ENCODE measurements at regions of chr21 and their contacts with region 1.

Region 1: DNA sequence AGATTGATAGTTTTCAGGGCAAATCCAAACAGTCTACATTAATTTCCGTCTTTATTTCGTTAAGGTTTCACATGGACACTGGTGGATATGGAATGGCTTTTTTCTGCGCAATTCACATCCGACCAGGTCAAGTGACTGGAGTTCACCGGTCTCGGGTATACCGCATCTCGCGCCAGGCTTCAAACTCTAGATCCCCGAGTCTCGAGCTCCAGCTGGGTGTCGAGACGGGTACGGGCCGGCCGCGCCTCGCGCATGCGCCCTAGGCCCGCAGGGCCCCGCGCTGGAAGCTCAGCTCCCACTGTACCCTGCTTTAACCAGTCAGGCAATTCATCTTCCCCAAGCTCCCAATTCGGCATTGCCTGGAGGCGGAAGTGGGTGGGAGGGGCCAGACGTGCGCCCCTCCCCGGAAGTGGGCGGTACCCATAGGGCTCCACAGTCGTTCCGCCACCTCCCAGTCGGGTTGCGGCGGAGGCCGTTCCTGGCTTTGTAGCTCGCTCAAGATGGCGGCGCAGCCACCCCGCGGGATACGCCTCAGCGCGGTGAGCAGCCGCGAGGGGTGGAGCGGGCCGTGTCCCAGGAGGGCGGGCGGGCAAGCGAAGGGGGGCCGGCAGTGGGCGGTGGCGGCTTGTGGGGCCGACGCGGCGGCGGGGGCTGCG is at the start of gene MORC3:
- DNase-seq: peak; percentile 98 to 99 (median 99)
- ATAC-seq: peak; percentile 99
- H3K4me3 ChIP-seq: peak within 1 kb of the TSS; percentile 75
- H3K27ac ChIP-seq: peak within 1 kb of the TSS; percentile 94
- H3K4me1 ChIP-seq: peaks cover 4% of the 10 kb centered on the region
- H3K27me3 ChIP-seq: no peaks in the 10 kb centered on the region
- total RNA-seq, gene MORC3: 20.6 to 23.1 (median 21.8) TPM

Region 2: GRCh38 chr21:36047139-36047538 is 272.8 kb before region 1 on chr21:
- intact Hi-C with region 1: no loop called
- DNase-seq: no peak
- ATAC-seq: no peak
- H3K4me3 ChIP-seq: no peak overlapping the region
- H3K27ac ChIP-seq: no peak overlapping the region
- H3K4me1 ChIP-seq: no peaks in the 10 kb centered on the region
- H3K27me3 ChIP-seq: no peaks in the 10 kb centered on the region

Region 3: DNA sequence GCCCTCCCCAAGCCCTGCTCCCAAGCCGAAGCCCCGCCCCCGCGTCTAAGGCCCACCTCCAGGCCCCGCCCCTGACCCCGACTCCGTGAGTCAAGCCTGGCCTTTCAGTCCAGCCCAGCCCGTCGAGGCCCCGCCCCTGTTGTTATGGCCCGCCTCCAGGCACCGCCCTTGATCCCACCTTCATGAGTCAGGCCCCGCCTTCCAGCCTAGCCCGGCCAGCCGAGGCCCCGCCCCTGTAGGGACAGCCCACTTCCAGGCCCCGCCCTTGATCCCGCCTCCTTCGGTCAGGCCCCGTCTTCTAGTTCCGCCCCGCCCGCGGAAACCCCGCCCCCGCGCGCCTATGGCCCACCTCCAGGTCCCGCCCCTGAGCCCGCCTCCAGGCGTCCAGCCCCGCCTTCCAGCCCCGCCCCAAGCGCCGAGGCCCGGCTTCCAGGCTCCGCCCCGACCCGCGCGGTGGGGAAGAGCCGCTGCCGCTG is 163.5 kb before region 1 on chr21:
- intact Hi-C with region 1: loop called in 1 of 4 experiments (anchors 10 kb)
- DNase-seq: peak; percentile 99 to 100 (median 100)
- ATAC-seq: peak; percentile 97
- H3K4me3 ChIP-seq: peak overlapping the region; percentile 81
- H3K27ac ChIP-seq: no peak overlapping the region
- H3K4me1 ChIP-seq: no peaks in the 10 kb centered on the region
- H3K27me3 ChIP-seq: no peaks in the 10 kb centered on the region

Region 4: DNA sequence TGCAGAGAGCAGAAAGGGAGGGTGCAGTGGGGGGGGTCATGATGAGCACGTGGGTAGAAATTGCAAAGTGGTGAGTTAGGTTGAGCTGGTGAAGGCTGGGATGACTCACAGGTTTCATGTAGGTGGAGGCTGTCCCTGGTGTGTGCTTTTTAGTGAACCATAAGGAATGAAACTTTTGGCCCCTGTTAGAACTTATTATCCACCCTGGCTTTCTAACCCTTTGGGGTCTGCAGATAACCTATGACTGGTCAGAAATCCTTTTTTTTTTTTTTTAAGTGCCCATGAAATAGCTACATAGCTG is 116.3 kb before region 1 on chr21:
- intact Hi-C with region 1: no loop called
- DNase-seq: no peak
- ATAC-seq: peak; percentile 43 to 44
- H3K4me3 ChIP-seq: no peak overlapping the region
- H3K27ac ChIP-seq: no peak overlapping the region
- H3K4me1 ChIP-seq: no peaks in the 10 kb centered on the region
- H3K27me3 ChIP-seq: no peaks in the 10 kb centered on the region